Tibial artery (tissue), 4 donors: ENCODE measurements at regions of chr14 and their contacts with region 1.

Region 1: DNA sequence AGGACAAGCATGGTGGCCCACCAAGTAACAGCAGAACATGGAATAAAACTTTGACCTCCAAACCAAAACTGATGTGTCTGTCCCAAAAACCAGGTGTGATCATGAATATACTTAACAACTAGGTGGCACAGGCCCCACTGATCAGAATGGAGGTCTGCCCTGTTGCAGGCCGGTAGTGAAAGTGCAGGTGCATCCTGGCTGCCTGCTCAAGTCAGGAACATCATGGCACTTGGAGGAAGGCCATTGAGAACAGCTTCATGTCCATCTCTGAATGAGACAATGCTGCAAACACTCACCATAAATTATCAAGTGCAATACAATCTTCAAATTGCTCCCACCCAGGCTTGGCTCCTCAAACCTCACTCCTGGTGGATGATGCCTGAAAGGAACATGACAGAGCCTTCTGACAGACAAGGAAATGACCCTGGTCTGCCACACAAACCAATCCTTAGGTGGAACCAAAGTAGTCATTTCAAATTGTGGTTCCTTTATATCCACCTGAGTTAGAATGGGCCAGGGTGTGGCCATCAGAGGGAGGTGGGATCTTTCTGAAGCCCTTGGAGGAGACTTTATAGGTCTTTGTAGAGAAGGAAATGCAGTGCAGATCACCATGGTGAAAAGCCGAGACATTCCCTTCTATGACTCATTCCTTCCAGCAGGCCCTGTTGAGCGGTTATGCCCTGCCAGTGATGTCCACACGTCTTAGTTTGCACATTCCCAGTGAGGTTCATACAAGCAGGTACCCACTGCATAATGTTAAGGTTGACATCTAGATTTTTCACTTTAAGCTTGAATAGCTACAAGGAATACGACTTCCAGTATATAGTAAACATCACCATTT is 36.0 kb downstream of the EGLN3 start:
- DNase-seq: peak in 1 of 2 donors; percentile 79
- H3K4me3 ChIP-seq: no peak overlapping the region
- H3K27ac ChIP-seq: peak overlapping the region; percentile 55 to 59
- H3K4me1 ChIP-seq: peaks cover 0 to 36% (median 14%) of the 10 kb centered on the region in 4 donors
- H3K27me3 ChIP-seq: no peaks in the 10 kb centered on the region
- CTCF ChIP-seq: peak in 1 of 2 experiments; percentile 18

Region 2: DNA sequence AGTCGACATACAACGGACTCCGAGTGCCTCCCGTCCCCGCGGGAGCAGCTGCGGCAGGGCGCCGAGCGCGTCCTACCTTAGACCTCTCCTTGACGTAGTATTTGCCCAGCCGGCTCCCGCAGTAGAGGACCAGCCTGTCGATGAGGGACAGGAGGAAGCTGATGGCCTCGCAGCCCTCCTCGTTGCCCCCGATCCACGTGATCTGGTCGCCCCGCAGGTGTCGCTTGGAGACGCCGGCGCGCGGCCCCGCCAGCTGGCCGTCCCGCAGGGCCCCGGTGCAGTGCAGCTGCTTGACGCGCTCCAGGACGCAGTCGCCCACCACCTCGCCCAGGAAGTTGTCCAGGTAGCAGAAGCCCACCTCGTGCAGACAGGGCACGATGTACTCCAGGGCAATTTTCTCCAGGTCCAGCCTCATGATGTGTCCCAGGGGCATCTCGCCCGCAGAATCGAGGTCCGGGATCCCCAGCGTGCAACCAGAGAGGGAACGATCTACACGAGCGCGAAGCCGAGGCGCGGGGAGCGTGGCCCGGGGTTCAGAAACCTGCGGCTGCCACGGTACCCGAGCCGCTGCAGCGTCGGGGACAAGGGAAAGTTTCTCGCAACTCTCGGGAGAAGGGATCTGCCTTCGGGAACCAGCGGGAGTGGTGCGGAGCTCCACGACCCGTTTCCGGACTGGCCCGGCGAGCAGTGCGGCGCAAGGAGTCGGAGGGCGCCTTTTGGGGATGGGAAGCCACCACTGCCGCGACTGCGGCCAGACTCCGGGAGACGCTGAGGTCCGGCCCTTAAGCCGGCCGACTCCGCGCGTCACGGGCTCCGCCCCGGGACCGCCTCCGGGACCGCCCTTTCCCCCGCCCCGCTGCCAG is 35.7 kb after region 1 on chr14 and contains the start of gene EGLN3:
- intact Hi-C with region 1: loop called (anchors 5 kb)
- DNase-seq: peak; percentile 81 to 95
- H3K4me3 ChIP-seq: peak within 1 kb of the TSS; percentile 87 to 95
- H3K27ac ChIP-seq: peak within 1 kb of the TSS; percentile 82 to 89
- H3K4me1 ChIP-seq: peaks cover 0 to 49% (median 21%) of the 10 kb centered on the region in 4 donors
- H3K27me3 ChIP-seq: no peaks in the 10 kb centered on the region
- CTCF ChIP-seq: no peak

Region 3: DNA sequence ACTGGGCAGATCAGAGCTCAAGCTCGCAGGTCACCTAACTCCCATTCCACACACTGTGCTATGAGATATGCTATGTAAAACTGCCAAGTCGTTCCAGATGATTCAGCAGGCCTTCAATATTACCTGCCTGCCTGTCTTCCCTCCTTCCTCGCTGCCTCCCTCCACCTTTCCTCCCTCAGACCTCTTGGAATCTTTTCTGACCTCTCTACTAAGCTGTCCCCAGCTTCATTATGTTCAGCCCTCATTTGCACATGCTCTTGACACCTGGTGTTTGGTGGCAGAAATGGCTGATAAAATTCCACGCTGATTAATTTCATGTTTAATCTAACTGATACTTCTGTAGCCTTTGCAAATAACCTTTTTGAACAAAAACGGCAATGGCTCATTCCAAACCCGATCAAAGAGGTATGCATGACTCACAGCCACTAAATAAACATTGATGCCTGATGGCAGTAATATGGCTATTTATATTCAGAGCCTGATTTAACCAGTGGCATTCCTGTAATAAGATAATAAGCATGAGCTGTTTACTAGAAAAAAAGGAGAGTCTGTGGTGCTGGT is 166.8 kb after region 1 on chr14:
- intact Hi-C with region 1: loop called (anchors 1 kb)
- DNase-seq: no peak
- H3K4me3 ChIP-seq: no peak overlapping the region
- H3K27ac ChIP-seq: peak overlapping the region; percentile 21 to 38
- H3K4me1 ChIP-seq: peaks cover 0 to 18% (median 10%) of the 10 kb centered on the region in 4 donors
- H3K27me3 ChIP-seq: no peaks in the 10 kb centered on the region
- CTCF ChIP-seq: no peak